PC-3 (cell line): ENCODE measurements at regions of chr9 and their contacts with region 1.

Region 1: DNA sequence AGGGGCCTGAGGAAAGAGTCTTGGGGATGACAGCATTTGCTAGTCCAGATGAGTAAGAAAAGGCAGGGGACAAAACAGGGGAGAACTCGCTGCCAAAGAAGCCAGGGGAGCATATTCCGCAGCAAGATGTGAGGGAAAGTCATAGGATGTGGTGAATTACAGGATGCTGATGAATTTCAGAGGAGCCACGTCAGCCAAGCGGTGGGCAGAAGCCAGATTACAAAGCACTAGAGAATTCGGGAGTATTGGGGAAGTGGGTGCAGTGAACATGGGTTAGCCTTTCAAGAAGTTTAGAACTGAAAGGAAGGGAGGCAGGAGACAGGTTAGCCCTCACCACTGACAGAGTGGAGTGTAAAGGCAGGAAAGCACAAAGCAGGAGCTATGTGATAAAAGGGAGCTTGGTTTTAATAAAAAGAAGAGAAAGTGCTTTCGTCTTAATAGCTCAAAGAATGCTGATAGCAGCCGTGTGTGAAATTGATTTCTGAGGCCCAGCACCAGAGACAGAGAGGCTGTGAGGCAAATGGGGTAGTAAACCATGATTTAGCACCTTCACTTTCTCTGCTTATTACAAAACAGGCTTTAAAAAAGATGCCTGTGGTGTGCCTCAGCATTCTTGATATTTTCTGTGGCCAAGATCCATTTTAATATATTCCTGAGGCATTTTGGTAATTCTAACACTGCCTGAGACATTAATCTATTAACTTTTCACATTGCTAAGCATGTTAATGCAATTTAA is 16.9 kb downstream of the ADAMTSL1 start:
- DNase-seq: peak; percentile 92
- ATAC-seq: peak; percentile 75
- H3K4me3 ChIP-seq: peak overlapping the region; percentile 50; the same call in 1 of the 2 replicates
- H3K27ac ChIP-seq: peak overlapping the region; percentile 99
- H3K4me1 ChIP-seq: peaks cover 59% of the 10 kb centered on the region
- H3K27me3 ChIP-seq: no peaks in the 10 kb centered on the region
- CTCF ChIP-seq: no peak

Region 2: DNA sequence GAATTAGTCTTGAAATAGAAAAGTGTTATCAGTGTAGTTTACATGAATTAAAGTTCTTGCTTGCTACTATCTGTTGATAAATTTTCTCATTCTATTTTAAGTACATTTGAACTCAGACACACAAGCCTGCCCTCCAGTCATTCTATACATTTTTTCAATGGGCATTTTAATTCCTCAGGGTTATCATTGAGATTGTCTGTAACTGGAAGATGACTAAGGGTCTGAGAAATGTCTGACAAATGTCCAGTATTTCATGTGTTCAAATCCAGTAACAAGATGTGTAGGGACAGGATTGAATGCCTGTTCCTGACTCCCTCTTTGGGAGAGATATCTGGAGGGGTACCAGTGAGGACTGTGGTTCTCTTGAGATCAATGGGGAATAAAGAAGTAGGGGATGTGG is 240.8 kb before region 1 on chr9:
- CTCF ChIA-PET with region 1: no interaction called
- POLR2A ChIA-PET with region 1: no interaction called
- intact Hi-C with region 1: loop called (anchors 5 kb)
- DNase-seq: no peak
- ATAC-seq: no peak
- H3K4me3 ChIP-seq: no peak overlapping the region
- H3K27ac ChIP-seq: no peak overlapping the region
- H3K4me1 ChIP-seq: peaks cover 13% of the 10 kb centered on the region
- H3K27me3 ChIP-seq: no peaks in the 10 kb centered on the region
- CTCF ChIP-seq: no peak

Region 3: DNA sequence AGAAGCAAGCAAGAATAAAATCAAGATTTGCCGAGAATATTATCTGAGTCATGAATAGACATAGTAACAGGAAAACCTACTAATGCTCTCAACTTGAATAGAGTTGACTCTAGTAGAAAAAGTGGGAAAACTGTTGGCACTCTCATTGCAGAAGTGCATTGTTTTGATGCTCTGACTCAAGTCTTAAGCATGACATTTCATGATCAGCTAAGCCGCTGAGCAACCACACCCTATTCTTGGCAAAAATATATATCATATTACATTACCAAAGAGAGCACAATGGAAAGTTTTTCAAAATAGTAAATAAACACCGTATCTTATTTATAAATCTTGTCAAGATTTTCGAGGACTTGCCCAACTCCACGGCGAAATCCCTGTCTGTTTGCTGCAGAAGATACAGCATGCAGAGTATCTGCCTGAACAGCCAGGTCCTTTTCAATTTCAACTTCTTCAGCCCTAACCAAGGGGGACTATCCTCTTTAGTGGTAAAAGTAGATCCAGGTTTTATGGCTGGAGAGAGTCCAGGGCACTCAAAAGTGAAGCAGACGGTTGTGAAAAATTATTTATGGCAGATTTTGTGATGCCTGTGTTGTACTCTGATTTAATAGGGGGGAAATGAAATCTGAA is 30.7 kb before region 1 on chr9:
- CTCF ChIA-PET with region 1: no interaction called
- POLR2A ChIA-PET with region 1: no interaction called
- intact Hi-C with region 1: loop called (anchors 1 kb)
- DNase-seq: peak; percentile 94
- ATAC-seq: peak; percentile 85
- H3K4me3 ChIP-seq: peak overlapping the region; percentile 51; the same call in 1 of the 2 replicates
- H3K27ac ChIP-seq: peak overlapping the region; percentile 89
- H3K4me1 ChIP-seq: peaks cover 60% of the 10 kb centered on the region
- H3K27me3 ChIP-seq: no peaks in the 10 kb centered on the region
- CTCF ChIP-seq: no peak

Region 4: DNA sequence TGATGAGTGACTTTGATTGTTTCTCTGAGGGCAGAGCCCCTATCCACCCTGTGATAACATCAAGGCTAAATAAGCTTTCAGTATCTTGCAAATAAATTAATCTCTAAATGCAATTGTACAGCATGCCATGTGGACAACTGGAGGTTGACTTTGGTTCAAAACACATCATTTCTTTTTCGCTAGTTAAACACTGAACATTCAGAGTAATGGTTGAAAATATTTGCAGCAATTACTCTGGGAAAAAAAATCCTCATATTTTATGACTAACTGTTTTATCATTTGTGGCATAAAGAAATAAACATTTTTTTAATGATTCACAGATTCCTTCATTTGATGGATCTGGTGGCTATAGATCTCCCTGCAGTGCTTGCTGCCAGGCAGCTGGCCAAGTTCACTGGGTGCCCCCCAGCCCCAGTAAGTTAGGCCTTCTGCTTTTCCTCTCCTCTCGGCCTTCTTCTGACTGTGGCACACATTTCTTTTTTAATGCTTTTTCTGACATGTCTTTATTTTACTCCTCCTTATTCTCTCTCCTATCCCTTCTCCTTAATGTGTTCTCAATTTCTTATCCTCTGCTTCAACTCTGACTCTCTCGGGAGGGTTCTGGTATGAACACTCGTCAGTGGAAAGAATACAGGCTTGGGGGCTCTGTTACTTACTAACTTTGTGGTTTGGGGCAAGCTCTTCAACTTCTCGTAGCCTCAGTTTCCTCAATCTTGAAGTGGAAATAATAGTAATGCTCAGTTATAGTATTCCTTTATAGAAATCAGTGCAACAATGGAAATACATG is 52.8 kb after region 1 on chr9:
- CTCF ChIA-PET with region 1: no interaction called
- POLR2A ChIA-PET with region 1: no interaction called
- intact Hi-C with region 1: loop called (anchors 5 kb)
- DNase-seq: peak; percentile 81
- ATAC-seq: peak; percentile 73
- H3K4me3 ChIP-seq: no peak overlapping the region
- H3K27ac ChIP-seq: peak overlapping the region; percentile 95
- H3K4me1 ChIP-seq: peaks cover 34% of the 10 kb centered on the region
- H3K27me3 ChIP-seq: no peaks in the 10 kb centered on the region
- CTCF ChIP-seq: no peak

Region 5: GRCh38 chr9:18666986-18667772 is 176.4 kb after region 1 on chr9:
- CTCF ChIA-PET with region 1: no interaction called
- POLR2A ChIA-PET with region 1: no interaction called
- intact Hi-C with region 1: loop called (anchors 5 kb)
- DNase-seq: peak; percentile 55
- ATAC-seq: peak; percentile 68
- H3K4me3 ChIP-seq: no peak overlapping the region
- H3K27ac ChIP-seq: peak overlapping the region; percentile 17; the same call in 1 of the 2 replicates
- H3K4me1 ChIP-seq: peaks cover 28% of the 10 kb centered on the region
- H3K27me3 ChIP-seq: no peaks in the 10 kb centered on the region
- CTCF ChIP-seq: no peak